PC-9 (cell line): ENCODE measurements at regions of chr4 and their contacts with region 1.

Region 1: DNA sequence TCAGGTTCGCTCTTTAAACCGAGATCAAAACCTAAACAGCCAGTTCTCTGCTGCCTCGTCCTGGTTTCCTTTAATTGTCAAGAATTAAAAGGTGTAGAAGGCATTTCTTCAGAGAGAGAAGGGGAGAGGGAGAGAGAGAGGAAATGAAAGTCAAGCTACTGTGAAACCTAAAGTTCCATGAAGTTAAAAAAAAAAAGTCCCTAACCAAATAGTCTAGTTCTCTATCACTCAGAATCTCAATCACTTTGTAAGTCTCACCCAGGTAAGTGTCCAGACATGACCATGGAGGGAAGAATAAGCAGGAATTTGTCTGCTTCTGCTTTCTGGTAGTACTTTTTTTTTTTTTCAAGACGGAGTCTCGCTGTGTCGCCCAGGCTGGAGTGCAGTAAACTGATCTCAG is 18.8 kb upstream of the SMIM14 start:
- DNase-seq: no peak
- H3K4me3 ChIP-seq: no peak overlapping the region
- H3K27ac ChIP-seq: no peak overlapping the region
- H3K4me1 ChIP-seq: no peaks in the 10 kb centered on the region
- H3K27me3 ChIP-seq: no peaks in the 10 kb centered on the region
- CTCF ChIP-seq: no peak

Region 2: GRCh38 chr4:39469429-39470077 is 187.9 kb before region 1 on chr4:
- CTCF ChIA-PET with region 1: no interaction called
- POLR2A ChIA-PET with region 1: no interaction called
- intact Hi-C with region 1: loop called (anchors 1 kb)
- DNase-seq: peak; percentile 52 to 77
- H3K4me3 ChIP-seq: no peak overlapping the region
- H3K27ac ChIP-seq: peak overlapping the region; percentile 65
- H3K4me1 ChIP-seq: peaks cover 9% of the 10 kb centered on the region
- H3K27me3 ChIP-seq: no peaks in the 10 kb centered on the region
- CTCF ChIP-seq: peak; percentile 93